CD8-positive, alpha-beta T cell (primary cell): ENCODE measurements at regions of chr9 and their contacts with region 1.

Region 1: DNA sequence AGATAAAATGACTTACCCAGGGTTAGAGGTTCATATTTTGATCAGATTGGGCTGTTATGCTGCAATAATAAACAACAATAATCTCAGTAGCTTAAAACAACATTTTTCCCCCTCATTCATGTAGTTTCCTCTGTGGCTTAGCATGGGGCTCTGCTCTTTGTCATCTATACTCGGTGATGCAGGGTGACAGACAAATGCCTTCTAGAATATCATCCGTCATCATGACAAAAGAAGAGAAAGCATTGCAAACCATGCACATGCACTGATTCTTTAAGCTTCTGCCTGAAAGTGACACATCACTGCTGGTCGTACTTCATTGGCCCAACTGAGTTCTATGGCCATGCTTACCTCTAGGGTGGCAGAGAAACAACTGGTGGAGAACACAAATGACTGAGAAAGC is 58.8 kb upstream of the MAMDC2 start:
- DNase-seq: no peak
- ATAC-seq: no peak
- H3K4me3 ChIP-seq: no peak overlapping the region
- H3K4me3 Mint-ChIP-seq: no peak overlapping the region
- H3K27ac ChIP-seq: no peak overlapping the region
- H3K27ac Mint-ChIP-seq: no peak overlapping the region
- H3K4me1 ChIP-seq: no peaks in the 10 kb centered on the region
- H3K4me1 Mint-ChIP-seq: no peaks in the 10 kb centered on the region
- H3K27me3 ChIP-seq: no peaks in the 10 kb centered on the region
- H3K27me3 Mint-ChIP-seq: peaks cover 26% of the 10 kb centered on the region
- CTCF ChIP-seq: no peak

Region 2: DNA sequence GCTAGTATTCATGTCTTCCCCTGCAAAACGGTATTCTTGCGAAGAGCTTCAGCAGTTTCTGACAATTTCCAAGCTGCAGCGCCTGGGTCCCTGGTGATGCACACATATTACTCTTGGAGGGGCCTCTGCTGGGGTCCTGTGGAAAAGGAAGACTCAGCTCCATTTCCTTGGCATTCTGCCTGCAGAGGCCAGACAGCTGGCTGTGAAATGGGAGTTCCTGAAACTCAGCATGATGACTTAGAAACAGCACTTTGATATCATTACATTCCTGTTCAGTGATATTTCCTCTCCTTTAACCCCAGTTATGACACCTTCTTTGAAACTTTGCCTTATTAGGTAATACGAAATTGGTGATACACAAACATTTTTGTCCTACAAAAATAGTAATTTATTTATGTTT is 411.2 kb before region 1 on chr9:
- CTCF ChIA-PET with region 1: no interaction called
- POLR2A ChIA-PET with region 1: no interaction called
- intact Hi-C with region 1: no loop called
- DNase-seq: no peak
- ATAC-seq: no peak
- H3K4me3 ChIP-seq: no peak overlapping the region
- H3K4me3 Mint-ChIP-seq: no peak overlapping the region
- H3K27ac ChIP-seq: no peak overlapping the region
- H3K27ac Mint-ChIP-seq: no peak overlapping the region
- H3K4me1 ChIP-seq: no peaks in the 10 kb centered on the region
- H3K4me1 Mint-ChIP-seq: no peaks in the 10 kb centered on the region
- H3K27me3 ChIP-seq: peaks cover 0 to 3% of the 10 kb centered on the region in 2 experiments
- H3K27me3 Mint-ChIP-seq: peaks cover 6% of the 10 kb centered on the region
- CTCF ChIP-seq: no peak

Region 3: GRCh38 chr9:69971643-69972449 is 13.0 kb before region 1 on chr9:
- CTCF ChIA-PET with region 1: interaction called, 10 read pairs
- POLR2A ChIA-PET with region 1: no interaction called
- intact Hi-C with region 1: no loop called
- DNase-seq: peak; percentile 1 to 52 (median 38)
- ATAC-seq: no peak
- H3K4me3 ChIP-seq: no peak overlapping the region
- H3K4me3 Mint-ChIP-seq: no peak overlapping the region
- H3K27ac ChIP-seq: no peak overlapping the region
- H3K27ac Mint-ChIP-seq: no peak overlapping the region
- H3K4me1 ChIP-seq: no peaks in the 10 kb centered on the region
- H3K4me1 Mint-ChIP-seq: no peaks in the 10 kb centered on the region
- H3K27me3 ChIP-seq: no peaks in the 10 kb centered on the region
- H3K27me3 Mint-ChIP-seq: peaks cover 20% of the 10 kb centered on the region
- CTCF ChIP-seq: peak; percentile 53

Region 4: GRCh38 chr9:71025201-71025600 is 1040.4 kb after region 1 on chr9:
- CTCF ChIA-PET with region 1: no interaction called
- POLR2A ChIA-PET with region 1: no interaction called
- intact Hi-C with region 1: no loop called
- DNase-seq: no peak
- ATAC-seq: no peak
- H3K4me3 ChIP-seq: no peak overlapping the region
- H3K4me3 Mint-ChIP-seq: no peak overlapping the region
- H3K27ac ChIP-seq: no peak overlapping the region
- H3K27ac Mint-ChIP-seq: no peak overlapping the region
- H3K4me1 ChIP-seq: no peaks in the 10 kb centered on the region
- H3K4me1 Mint-ChIP-seq: no peaks in the 10 kb centered on the region
- H3K27me3 ChIP-seq: no peaks in the 10 kb centered on the region
- H3K27me3 Mint-ChIP-seq: no peaks in the 10 kb centered on the region
- CTCF ChIP-seq: no peak